ENCODE measurements at regions of chr9 and their contacts with region 1.

Region 1: GRCh38 chr9:99140685-99141314 is 35.9 kb downstream of the TGFBR1 start:
- DNase-seq: peak; percentile 59
- H3K4me3 Mint-ChIP-seq: no peak overlapping the region
- H3K27ac Mint-ChIP-seq: peak overlapping the region; percentile 60
- H3K4me1 Mint-ChIP-seq: peaks cover 42% of the 10 kb centered on the region
- H3K27me3 Mint-ChIP-seq: no peaks in the 10 kb centered on the region

Region 2: DNA sequence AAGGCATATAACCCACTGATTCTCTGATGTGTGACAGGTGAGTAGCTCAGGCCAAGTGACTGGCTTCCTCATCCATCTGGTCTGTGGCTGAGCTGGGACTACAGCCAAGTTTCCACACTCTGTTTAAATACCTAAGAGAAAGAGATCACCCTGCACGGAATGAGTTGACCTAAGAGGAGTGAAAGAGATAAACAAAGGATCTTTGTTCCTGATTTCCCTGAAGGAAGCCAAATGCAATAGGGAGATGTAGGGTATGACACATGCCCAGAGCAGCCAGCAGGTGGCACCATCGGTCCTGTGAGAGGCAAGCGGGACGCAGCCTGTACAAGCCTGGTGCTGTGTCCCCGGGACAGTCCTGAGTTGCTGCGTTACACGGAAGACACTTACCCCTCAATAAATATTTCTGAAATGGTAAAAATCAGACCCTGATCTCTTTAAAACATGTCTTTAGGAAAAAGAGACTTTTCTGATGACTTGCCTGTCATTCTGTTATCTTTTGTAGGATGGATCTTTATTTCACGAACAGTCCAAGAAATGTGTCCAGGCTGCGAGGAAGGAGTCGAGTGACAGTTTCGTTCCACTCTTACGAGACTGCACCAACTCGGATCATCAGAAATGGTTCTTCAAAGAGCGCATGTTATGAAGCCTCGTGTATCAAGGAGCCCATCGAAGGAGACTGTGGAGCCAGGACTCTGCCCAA is 292.2 kb before region 1 on chr9:
- CTCF ChIA-PET with region 1: interaction called, 33 read pairs
- DNase-seq: peak; percentile 84
- H3K4me3 Mint-ChIP-seq: no peak overlapping the region
- H3K27ac Mint-ChIP-seq: no peak overlapping the region
- H3K4me1 Mint-ChIP-seq: peaks cover 11% of the 10 kb centered on the region
- H3K27me3 Mint-ChIP-seq: peaks cover 3% of the 10 kb centered on the region

Region 3: DNA sequence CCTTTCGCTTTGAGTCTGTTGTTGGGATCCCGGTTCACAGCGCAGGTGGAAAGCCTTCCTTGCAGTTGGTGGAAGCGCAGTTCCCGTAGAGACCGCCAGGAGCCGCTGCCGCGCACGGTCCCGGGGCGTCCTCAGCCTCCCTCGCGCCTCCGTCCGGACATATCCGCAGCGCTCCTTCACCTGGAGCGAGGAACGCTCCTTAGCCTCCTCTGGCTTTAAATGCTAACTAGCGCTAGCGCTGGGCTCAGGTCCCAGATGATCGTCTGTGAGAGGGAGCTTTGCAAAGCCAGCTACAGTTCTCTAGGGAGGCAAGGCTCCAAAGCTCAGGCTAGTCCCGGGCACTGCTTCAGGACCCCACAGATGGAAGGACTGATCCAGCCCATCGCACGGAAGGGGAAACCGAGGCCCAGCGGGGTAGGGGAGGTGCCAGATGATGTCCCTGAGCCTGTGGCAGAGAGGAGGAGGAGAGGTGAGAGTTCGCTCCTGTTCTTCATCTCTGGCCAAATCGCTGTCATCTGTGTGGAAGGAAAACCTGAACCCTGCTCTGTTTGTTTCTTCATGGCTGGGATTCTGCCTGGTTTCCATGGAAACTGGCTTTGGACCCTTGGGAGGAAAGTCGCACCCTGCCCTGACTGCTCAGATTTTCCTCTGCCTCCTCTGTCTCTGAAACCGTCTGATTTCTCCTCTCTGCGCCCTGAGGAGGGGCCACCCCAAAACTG is 165.6 kb before region 1 on chr9:
- CTCF ChIA-PET with region 1: interaction called, 45 read pairs
- DNase-seq: peak; percentile 86
- H3K4me3 Mint-ChIP-seq: no peak overlapping the region
- H3K27ac Mint-ChIP-seq: no peak overlapping the region
- H3K4me1 Mint-ChIP-seq: peaks cover 13% of the 10 kb centered on the region
- H3K27me3 Mint-ChIP-seq: peaks cover 66% of the 10 kb centered on the region

Region 4: DNA sequence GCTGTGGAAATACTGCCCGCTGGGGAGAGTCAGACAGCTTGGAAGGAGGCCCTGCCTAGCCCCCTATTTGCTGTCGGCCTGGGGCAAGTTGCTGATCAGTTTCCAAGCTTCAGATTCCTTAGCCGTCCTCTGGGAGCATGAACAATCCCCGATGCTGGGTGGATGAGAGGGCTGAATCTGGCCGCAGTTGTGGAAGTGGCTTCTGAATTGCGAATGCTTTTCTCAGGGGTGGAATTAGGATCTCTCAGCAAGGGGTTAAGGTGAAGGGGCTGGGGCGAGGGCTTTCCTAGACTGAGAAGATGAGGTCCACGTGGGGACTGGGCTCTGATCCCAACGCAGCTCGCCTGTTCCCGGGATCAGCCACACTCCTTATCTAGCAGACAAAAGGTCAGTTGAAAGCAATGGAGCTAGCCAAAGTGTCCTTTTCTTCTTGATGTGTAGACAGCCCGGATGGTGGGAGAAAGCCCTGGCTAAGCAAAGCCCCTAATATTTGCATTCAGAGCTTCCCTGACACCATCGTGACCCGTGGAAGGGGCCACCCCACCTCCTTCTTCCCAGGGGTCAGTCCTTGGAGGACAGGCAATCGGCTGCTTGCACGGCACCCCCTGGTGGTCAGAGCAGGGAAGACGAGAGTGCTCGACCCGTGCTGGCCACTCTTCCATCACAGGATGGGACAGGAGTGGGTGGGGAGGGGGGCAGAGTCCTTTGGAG is 142.2 kb before region 1 on chr9:
- CTCF ChIA-PET with region 1: interaction called, 298 read pairs
- DNase-seq: peak; percentile 72
- H3K4me3 Mint-ChIP-seq: no peak overlapping the region
- H3K27ac Mint-ChIP-seq: no peak overlapping the region
- H3K4me1 Mint-ChIP-seq: peaks cover 31% of the 10 kb centered on the region
- H3K27me3 Mint-ChIP-seq: peaks cover 50% of the 10 kb centered on the region

Region 5: DNA sequence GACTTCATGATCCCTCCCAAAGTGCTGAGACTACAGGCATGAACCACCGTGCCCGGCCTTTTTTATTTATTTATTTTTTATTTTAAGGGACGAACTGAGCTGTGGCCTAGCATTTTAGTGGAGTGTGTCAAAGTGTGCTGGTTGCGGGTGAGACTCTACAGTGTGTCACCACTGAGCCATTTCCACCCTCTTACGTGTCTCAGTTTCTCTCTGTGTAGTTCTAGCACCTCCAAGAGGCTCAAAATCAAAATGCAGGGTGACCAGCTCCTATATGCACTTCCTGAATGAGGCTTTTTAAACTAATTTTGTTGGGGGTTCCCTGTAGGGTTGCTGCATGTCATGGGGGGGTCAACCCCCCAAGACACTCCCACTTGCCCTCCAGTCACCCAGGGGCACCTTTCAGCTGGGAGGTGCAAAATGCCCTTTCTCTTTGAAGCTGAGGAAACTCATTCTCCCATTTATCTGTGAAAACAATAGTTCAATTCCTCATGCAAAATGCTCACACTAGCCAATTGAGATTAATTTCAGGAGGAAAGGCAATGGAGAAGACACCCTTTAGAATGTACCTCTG is 127.8 kb before region 1 on chr9:
- CTCF ChIA-PET with region 1: interaction called, 13 read pairs
- DNase-seq: no peak
- H3K4me3 Mint-ChIP-seq: no peak overlapping the region
- H3K27ac Mint-ChIP-seq: peak overlapping the region; percentile 92
- H3K4me1 Mint-ChIP-seq: peaks cover 23% of the 10 kb centered on the region
- H3K27me3 Mint-ChIP-seq: peaks cover 15% of the 10 kb centered on the region

Region 6: GRCh38 chr9:99104459-99105151 is 36.2 kb before region 1 on chr9 and contains the start of gene TGFBR1:
- CTCF ChIA-PET with region 1: interaction called, 24 read pairs
- DNase-seq: peak; percentile 95
- H3K4me3 Mint-ChIP-seq: peak within 1 kb of the TSS; percentile 74
- H3K27ac Mint-ChIP-seq: peak within 1 kb of the TSS; percentile 90
- H3K4me1 Mint-ChIP-seq: peaks cover 68% of the 10 kb centered on the region
- H3K27me3 Mint-ChIP-seq: no peaks in the 10 kb centered on the region

Region 7: GRCh38 chr9:99118782-99119466 is 21.9 kb before region 1 on chr9:
- CTCF ChIA-PET with region 1: interaction called, 13 read pairs
- DNase-seq: peak; percentile 75
- H3K4me3 Mint-ChIP-seq: peak overlapping the region; percentile 60
- H3K27ac Mint-ChIP-seq: peak overlapping the region; percentile 94
- H3K4me1 Mint-ChIP-seq: peaks cover 90% of the 10 kb centered on the region
- H3K27me3 Mint-ChIP-seq: no peaks in the 10 kb centered on the region

Measured in activated naive CD4-positive, alpha-beta T cell treated with anti-CD3 and anti-CD28 coated beads, Interleukin-2, amount 10 ng/mL, durations not matched to agents 7 days and 5 days (primary cell).